OCI-LY7 (cell line): ENCODE measurements at regions of chr11 and their contacts with region 1.

Region 1: GRCh38 chr11:58726737-58727414 is 4.9 kb downstream of the GLYAT start:
- DNase-seq: no peak
- H3K4me3 ChIP-seq: no peak overlapping the region
- H3K27ac ChIP-seq: no peak overlapping the region
- H3K4me1 ChIP-seq: no peaks in the 10 kb centered on the region
- CTCF ChIP-seq: no peak

Region 2: DNA sequence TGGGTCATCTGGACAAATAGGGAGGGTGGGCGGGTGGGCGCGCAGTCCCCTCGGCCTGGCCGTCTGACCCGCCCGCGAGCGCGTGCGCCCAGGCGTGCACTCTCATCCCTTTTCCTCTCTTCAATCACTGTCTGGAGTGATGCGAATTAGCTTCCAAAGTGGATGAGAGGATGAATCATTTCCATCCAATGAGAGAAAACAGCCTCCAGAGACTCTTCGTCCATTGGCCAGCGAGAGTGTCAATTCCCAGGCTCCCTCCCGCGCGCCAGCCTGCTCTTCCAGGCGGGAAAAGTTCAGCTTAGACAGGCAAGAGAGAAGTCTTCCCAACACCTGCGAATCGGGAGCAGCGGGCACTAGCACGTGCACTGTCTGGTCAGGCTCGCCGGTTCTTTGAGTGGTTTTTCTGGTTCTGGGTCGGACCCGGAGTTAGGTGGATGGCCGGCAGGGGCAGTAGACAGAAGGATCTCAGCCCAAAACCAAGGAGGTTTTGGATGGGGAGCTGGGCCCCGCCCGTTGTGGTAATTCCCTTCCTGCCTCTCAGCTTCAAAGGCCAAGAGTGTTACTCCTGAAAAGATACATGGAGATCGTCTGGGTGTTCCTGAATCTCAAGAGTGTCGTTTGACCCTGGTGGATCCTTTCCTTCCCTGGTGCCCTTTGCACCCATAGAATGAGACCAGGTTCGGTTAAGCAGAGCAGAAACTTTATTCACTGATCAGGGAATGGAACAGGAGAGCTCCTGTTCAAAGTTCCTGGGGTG is 179.0 kb after region 1 on chr11:
- CTCF ChIA-PET with region 1: no interaction called
- POLR2A ChIA-PET with region 1: interaction called, 12 read pairs
- intact Hi-C with region 1: no loop called
- DNase-seq: no peak
- H3K4me3 ChIP-seq: no peak overlapping the region
- H3K27ac ChIP-seq: no peak overlapping the region
- H3K4me1 ChIP-seq: no peaks in the 10 kb centered on the region
- CTCF ChIP-seq: no peak

Region 3: GRCh38 chr11:59417023-59417422 is 690.1 kb after region 1 on chr11:
- CTCF ChIA-PET with region 1: no interaction called
- POLR2A ChIA-PET with region 1: interaction called, 14 read pairs
- intact Hi-C with region 1: no loop called
- DNase-seq: no peak
- H3K4me3 ChIP-seq: no peak overlapping the region
- H3K27ac ChIP-seq: no peak overlapping the region
- H3K4me1 ChIP-seq: no peaks in the 10 kb centered on the region
- CTCF ChIP-seq: no peak